PC-9 (cell line): ENCODE measurements at regions of chr20 and their contacts with region 1.

Region 1: GRCh38 chr20:37527638-37528441 is at the start of gene BLCAP:
- DNase-seq: peak; percentile 70 to 89
- H3K4me3 ChIP-seq: peak within 1 kb of the TSS; percentile 88
- H3K27ac ChIP-seq: peak within 1 kb of the TSS; percentile 86
- H3K4me1 ChIP-seq: peaks cover 41% of the 10 kb centered on the region
- H3K27me3 ChIP-seq: no peaks in the 10 kb centered on the region
- CTCF ChIP-seq: no peak
- total RNA-seq, gene BLCAP: 99.9 and 109 TPM in 2 replicates

Region 2: DNA sequence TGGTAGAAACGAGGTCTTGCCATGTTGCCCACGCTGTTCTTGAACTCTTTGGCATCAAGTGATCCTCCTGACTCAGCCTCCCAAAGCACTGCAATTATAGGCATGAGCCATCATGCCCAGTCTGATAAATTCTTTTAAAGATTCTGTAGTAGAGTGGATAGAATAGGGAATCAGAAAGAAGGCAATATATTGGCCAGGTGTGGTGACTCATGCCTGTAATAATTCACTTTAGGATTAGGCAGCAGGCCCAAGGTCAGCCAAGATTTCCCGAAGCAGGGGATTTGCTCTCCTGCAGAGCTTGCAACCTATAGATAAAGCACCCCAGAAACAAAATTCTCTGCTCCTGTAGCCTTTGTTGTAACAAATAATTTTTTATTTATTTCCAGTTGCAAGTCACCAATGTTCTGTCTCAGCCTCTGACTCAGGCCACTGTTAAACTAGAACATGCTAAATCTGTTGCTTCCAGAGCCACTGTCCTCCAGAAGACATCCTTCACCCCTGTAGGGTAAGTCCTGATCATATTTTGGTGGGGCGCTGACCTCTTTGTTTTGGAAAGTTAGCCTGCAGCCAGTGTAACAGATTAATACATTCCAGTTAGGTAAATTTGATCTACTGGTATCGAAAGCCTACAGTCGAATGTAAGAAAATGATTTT is 318.1 kb before region 1 on chr20:
- CTCF ChIA-PET with region 1: no interaction called
- POLR2A ChIA-PET with region 1: interaction called, 18 read pairs
- intact Hi-C with region 1: no loop called
- DNase-seq: no peak
- H3K4me3 ChIP-seq: no peak overlapping the region
- H3K27ac ChIP-seq: no peak overlapping the region
- H3K4me1 ChIP-seq: no peaks in the 10 kb centered on the region
- H3K27me3 ChIP-seq: no peaks in the 10 kb centered on the region
- CTCF ChIP-seq: no peak

Region 3: GRCh38 chr20:37323985-37324384 is 203.9 kb before region 1 on chr20:
- CTCF ChIA-PET with region 1: no interaction called
- POLR2A ChIA-PET with region 1: interaction called, 12 read pairs
- intact Hi-C with region 1: no loop called
- DNase-seq: no peak
- H3K4me3 ChIP-seq: no peak overlapping the region
- H3K27ac ChIP-seq: no peak overlapping the region
- H3K4me1 ChIP-seq: no peaks in the 10 kb centered on the region
- H3K27me3 ChIP-seq: no peaks in the 10 kb centered on the region
- CTCF ChIP-seq: no peak

Region 4: GRCh38 chr20:37384683-37385174 is 143.1 kb before region 1 on chr20:
- CTCF ChIA-PET with region 1: no interaction called
- POLR2A ChIA-PET with region 1: interaction called, 6 read pairs
- intact Hi-C with region 1: loop called (anchors 5 kb)
- DNase-seq: peak in 1 of 2 experiments; percentile 55
- H3K4me3 ChIP-seq: no peak overlapping the region
- H3K27ac ChIP-seq: no peak overlapping the region
- H3K4me1 ChIP-seq: peaks cover 8% of the 10 kb centered on the region; the same call in 1 of the 2 replicates
- H3K27me3 ChIP-seq: no peaks in the 10 kb centered on the region
- CTCF ChIP-seq: peak; percentile 80

Region 5: DNA sequence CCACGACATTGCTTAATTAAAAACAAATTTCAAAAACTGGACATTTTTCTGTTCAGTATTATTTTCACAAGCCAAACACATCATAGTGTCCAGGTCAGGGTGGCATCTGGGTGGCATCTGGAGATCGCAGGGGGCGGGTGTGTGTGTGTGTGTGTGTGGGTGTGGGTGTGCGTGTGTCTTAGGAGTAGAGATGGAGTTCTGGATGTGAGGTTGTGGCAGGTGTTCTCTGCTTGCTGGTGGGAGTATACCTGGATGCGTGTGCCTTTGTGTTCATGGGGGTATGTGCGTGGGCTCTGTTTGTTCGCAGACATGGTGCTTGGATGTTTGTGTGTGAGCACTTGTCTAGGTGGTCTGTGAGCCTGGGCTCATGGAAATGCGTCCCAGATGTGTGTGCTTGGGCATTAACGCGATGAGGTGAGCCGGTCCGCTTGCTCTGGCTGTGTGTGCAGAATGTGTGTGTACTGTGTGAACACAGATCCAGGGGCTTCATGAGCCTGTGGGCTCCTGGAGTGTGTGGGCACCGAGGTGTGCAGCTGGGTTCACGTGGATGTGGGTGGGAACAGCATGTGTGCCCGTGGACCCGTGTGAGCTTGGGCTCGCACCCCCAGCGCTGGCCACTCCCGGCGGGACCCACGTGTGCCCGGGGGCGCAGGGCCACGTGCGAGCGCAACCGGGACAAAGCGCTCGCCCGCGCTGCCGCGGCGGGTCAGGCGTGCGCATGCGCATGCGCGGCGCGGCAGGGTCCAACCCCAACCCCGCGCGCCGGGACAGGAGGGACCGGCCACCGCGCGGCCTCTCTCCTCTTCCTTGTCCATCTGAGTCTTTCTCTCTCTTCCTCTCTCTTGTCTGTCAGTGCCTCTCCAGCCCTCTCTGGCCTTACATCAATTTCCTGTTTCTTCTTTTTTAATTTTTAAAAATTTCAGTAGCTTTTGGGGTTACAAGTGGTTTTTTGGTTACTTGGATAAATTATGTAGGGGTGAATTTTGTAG is 121.5 kb before region 1 on chr20:
- CTCF ChIA-PET with region 1: no interaction called
- POLR2A ChIA-PET with region 1: interaction called, 5 read pairs
- intact Hi-C with region 1: loop called (anchors 5 kb)
- DNase-seq: peak in 1 of 2 experiments; percentile 53
- H3K4me3 ChIP-seq: peak overlapping the region; percentile 49; the same call in 1 of the 2 replicates
- H3K27ac ChIP-seq: no peak overlapping the region
- H3K4me1 ChIP-seq: no peaks in the 10 kb centered on the region
- H3K27me3 ChIP-seq: peaks cover 34% of the 10 kb centered on the region
- CTCF ChIP-seq: no peak

Region 6: DNA sequence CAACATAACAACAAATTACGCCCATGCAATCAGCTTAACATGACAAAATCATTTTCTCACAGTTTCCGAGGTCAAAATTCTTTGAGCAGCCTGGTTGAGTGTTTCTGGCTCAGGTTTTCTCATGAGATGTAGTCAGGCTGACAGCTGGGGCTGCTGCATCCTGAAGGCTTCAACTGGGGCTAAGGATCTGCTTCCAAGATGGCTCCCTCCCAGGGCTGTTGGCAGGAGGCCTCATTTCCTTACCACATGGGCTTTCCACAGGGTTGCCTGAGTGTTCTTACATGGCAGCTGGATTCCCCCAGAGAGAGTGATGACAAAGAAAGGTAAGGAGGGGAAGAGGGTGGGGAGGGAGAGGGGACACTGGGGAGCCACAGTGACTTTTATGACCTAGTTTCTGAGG is 69.9 kb before region 1 on chr20:
- CTCF ChIA-PET with region 1: no interaction called
- POLR2A ChIA-PET with region 1: no interaction called
- intact Hi-C with region 1: no loop called
- DNase-seq: no peak
- H3K4me3 ChIP-seq: no peak overlapping the region
- H3K27ac ChIP-seq: no peak overlapping the region
- H3K4me1 ChIP-seq: no peaks in the 10 kb centered on the region
- H3K27me3 ChIP-seq: peaks cover 92% of the 10 kb centered on the region
- CTCF ChIP-seq: no peak

Region 7: DNA sequence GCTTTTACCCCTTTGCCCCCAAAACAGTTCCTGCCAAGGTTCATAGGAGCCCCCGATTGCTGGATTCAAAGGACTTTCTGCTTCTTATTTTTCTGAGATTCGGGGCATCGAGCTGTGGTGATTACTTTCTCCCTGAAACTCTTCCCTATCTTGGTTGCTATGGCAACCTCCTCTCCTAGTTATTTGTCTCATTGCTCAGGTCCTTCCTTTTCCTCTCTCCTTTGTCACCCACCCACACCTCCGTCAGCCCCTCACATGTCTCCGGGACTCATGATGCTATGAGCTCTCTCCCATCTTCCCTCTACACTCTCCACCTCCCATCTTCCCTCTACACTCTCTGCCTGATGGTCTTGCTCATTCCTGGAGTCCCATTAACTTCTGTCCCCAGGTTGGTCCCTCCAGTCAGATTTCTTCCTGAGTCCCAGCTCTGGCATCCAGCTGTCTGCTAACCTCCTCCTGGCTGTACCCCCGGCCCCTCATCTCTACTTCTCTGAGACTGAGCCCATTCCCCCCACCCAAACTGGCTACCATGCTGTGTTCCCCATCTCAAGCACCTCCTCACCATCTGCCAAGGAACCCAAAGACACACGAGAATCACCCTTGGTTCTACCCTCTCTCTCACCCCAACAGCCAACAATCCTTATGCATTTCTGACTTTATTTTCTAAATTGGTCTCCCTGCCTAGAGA is 37.0 kb before region 1 on chr20:
- CTCF ChIA-PET with region 1: no interaction called
- POLR2A ChIA-PET with region 1: no interaction called
- intact Hi-C with region 1: no loop called
- DNase-seq: no peak
- H3K4me3 ChIP-seq: no peak overlapping the region
- H3K27ac ChIP-seq: no peak overlapping the region
- H3K4me1 ChIP-seq: no peaks in the 10 kb centered on the region
- H3K27me3 ChIP-seq: peaks cover 54% of the 10 kb centered on the region
- CTCF ChIP-seq: no peak